Activated CD4-positive, alpha-beta T cell treated with anti-CD3 and anti-CD28 coated beads for 36 hours (primary cell): ENCODE measurements at regions of chr1 and their contacts with region 1.

Region 1: GRCh38 chr1:25608488-25609178 is 8.0 kb upstream of the MAN1C1 start:
- DNase-seq: peak; percentile 95
- ATAC-seq: peak; percentile 99
- H3K4me3 Mint-ChIP-seq: no peak overlapping the region
- H3K27ac Mint-ChIP-seq: no peak overlapping the region
- H3K4me1 Mint-ChIP-seq: peaks cover 11% of the 10 kb centered on the region
- H3K27me3 Mint-ChIP-seq: peaks cover 6% of the 10 kb centered on the region

Region 2: GRCh38 chr1:25624156-25624555 is 15.5 kb after region 1 on chr1:
- CTCF ChIA-PET with region 1: interaction called, 23 read pairs
- POLR2A ChIA-PET with region 1: no interaction called
- intact Hi-C with region 1: no loop called
- DNase-seq: peak; percentile 47
- ATAC-seq: no peak
- H3K4me3 Mint-ChIP-seq: no peak overlapping the region
- H3K27ac Mint-ChIP-seq: peak overlapping the region; percentile 10
- H3K4me1 Mint-ChIP-seq: peaks cover 70% of the 10 kb centered on the region
- H3K27me3 Mint-ChIP-seq: no peaks in the 10 kb centered on the region

Region 3: DNA sequence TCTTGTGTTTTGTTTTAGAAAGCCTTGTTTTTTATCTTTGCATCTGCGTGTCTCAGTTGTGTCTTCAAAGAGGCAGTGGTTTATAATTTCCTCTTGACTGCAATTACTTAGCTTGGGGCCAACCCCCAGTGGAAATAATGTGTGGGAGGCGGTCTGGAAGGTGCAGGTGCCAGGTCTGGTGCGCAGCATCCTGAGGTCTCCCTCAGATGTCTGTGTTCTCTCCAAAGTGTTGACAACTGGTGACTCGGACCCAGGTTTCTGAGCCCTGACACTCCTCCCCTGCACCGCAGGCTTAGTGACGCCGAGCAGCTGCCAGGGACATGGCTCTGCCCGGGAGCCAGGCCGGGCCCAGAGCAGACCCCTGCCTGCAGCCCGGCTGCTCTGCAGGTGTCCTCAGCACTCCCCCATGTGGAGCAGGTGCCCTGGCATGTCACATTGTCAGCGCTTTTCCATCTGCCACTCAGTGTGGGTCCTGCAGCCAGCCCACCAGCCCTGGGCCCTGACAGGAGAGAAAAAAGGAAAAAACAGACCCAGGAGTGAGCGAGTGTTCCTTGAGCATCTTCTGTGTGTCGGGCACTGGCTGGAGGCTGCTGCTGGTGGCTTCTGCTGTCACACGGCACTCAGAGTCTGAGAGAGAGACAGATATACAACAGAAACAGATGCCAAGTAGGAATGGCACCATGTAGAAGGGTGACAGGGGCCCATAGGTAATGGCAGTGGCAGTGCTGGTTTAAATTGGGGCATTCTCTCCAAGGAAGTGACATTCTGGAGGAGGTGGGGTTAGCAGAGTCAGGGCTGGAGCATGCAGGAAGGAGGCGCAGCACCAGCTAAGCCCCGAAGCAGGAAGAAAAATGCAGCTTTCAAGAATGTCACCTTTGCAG is 166.5 kb after region 1 on chr1:
- CTCF ChIA-PET with region 1: interaction called, 3 read pairs
- POLR2A ChIA-PET with region 1: no interaction called
- intact Hi-C with region 1: loop called in 1 of 2 experiments (anchors 2 kb)
- DNase-seq: peak; percentile 94
- ATAC-seq: peak; percentile 85
- H3K4me3 Mint-ChIP-seq: peak overlapping the region; percentile 57
- H3K27ac Mint-ChIP-seq: peak overlapping the region; percentile 84
- H3K4me1 Mint-ChIP-seq: peaks cover 80% of the 10 kb centered on the region
- H3K27me3 Mint-ChIP-seq: no peaks in the 10 kb centered on the region

Region 4: GRCh38 chr1:25810341-25811299 is 202.0 kb after region 1 on chr1:
- CTCF ChIA-PET with region 1: interaction called, 11 read pairs
- POLR2A ChIA-PET with region 1: no interaction called
- intact Hi-C with region 1: loop called in 1 of 2 experiments (anchors 1 kb)
- DNase-seq: peak; percentile 89
- ATAC-seq: peak; percentile 86
- H3K4me3 Mint-ChIP-seq: no peak overlapping the region
- H3K27ac Mint-ChIP-seq: no peak overlapping the region
- H3K4me1 Mint-ChIP-seq: peaks cover 3% of the 10 kb centered on the region
- H3K27me3 Mint-ChIP-seq: no peaks in the 10 kb centered on the region